Mammary epithelial cell (primary cell): ENCODE measurements at regions of chr7 and their contacts with region 1.

Region 1: DNA sequence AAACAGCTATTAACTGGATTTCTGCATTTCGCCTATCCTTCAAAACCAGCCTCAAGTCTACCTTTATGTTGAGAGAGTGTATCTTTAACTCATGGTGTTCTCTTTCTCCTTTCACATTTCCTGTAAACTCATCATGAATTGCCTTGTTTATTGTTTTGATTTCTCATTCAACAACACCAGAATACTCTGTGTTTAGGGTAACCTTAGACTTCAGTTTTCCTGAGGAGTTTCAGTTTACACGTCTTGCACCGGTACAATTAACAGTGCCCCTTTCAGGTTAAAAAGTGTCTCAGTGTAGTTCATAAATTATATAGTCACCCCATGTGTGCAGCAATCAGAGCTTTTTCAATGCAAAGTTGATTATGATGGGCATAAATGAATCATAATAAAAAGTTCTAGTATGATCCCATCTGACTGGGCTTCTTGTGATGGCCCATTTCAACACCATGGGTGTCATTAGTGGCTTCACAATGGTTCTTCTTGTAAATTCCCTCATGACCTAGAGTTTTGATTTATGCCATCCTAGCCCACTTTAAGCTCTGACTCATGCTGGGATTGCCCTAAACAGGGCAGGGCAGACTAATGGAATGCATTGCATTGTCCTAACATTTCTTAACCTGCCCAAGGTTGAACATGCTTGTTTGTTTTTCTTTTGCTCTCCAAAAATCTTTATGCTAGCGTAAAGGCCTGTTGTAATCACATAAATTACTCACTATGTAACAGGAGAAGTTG is 22.0 kb downstream of the ITGB8 start:
- DNase-seq: peak; percentile 99
- H3K4me3 ChIP-seq: peak overlapping the region in 1 of 3 experiments; percentile 25
- H3K27ac ChIP-seq: peak overlapping the region; percentile 100
- H3K4me1 ChIP-seq: peaks cover 47% of the 10 kb centered on the region
- H3K27me3 ChIP-seq: no peaks in the 10 kb centered on the region
- CTCF ChIP-seq: no peak

Region 2: DNA sequence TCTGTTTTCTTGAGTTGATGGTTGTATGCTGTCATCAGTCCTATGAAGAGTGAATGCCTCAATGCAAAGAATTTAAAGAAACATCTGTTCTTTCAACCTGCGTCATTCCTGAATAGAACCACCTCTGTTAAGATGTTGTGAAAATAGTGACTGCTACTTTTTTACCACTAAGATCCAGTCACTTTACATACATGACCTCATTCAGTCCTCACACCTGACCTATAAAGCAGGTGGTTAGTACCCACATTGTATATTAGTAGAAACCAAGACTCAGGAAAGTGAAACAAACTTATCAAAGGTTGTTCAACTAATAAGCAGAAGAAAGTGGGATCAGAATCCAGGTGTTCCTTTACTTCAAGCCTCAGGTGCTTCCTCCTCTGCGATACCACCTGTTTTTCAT is 42.8 kb after region 1 on chr7:
- CTCF ChIA-PET with region 1: no interaction called
- dilution Hi-C with region 1: no loop called
- in situ Hi-C with region 1: no loop called
- intact Hi-C with region 1: loop called (anchors 5 kb)
- DNase-seq: no peak
- H3K4me3 ChIP-seq: no peak overlapping the region
- H3K27ac ChIP-seq: no peak overlapping the region
- H3K4me1 ChIP-seq: peaks cover 24% of the 10 kb centered on the region
- H3K27me3 ChIP-seq: no peaks in the 10 kb centered on the region
- CTCF ChIP-seq: no peak